Activated T-helper 1 cell treated with anti-CD3 and anti-CD28 coated beads, Interleukin-12 subunit alpha, Interleukin-12 subunit beta, Interleukin-2, Interleukin-4 antibody, amounts not matched to agents 30 ng/mL and 10 ng/mL and 1 ng/mL, durations not matched to agents 14 hours and 24 hours and 36 hours (primary cell): ENCODE measurements at regions of chr4 and their contacts with region 1.

Region 1: GRCh38 chr4:143184217-143185116 is at the start of gene USP38:
- DNase-seq: peak; percentile 80
- H3K4me3 Mint-ChIP-seq: peak within 1 kb of the TSS; percentile 92
- H3K27ac Mint-ChIP-seq: peak within 1 kb of the TSS; percentile 98
- H3K4me1 Mint-ChIP-seq: peaks cover 62% of the 10 kb centered on the region
- H3K27me3 Mint-ChIP-seq: no peaks in the 10 kb centered on the region
- total RNA-seq, gene USP38: 29.8 and 32.0 TPM in 2 replicates

Region 2: GRCh38 chr4:141220655-141221605 is 1963.5 kb before region 1 on chr4 and contains the start of gene ZNF330:
- intact Hi-C with region 1: loop called (anchors 2 kb)
- DNase-seq: peak; percentile 83
- H3K4me3 Mint-ChIP-seq: peak within 1 kb of the TSS; percentile 93
- H3K27ac Mint-ChIP-seq: peak within 1 kb of the TSS; percentile 98
- H3K4me1 Mint-ChIP-seq: peaks cover 47% of the 10 kb centered on the region
- H3K27me3 Mint-ChIP-seq: peaks cover 6% of the 10 kb centered on the region
- total RNA-seq, gene ZNF330: 57.8 and 62.9 TPM in 2 replicates

Region 3: DNA sequence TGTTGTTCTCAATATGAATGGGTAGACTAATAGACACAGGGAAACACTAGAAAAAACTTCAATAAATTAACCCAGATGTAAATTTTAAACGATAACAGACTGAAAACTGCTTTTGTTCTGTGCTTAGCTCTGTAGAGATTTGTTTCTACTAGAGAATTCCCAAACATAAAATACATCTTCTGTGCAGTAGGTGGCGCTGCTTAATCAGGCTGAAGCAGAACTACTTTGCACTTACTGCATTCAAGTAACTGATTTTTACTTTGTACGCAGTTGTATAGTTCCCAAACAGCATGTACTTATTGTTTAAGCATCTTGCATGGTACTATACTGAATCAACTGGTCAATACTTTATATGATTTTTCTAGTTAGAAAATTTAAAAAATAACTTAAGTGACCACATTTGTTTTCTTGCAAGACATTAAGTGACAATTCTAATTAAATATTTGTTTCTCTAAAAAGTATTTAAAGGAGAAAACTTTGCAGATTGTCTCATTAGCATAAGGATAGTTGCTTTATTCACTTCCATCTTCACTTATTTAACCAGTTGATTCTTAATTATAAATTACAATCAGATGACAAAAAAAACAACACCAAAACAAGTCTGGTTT is 1057.5 kb before region 1 on chr4:
- intact Hi-C with region 1: loop called (anchors 2 kb)
- DNase-seq: peak; percentile 27
- H3K4me3 Mint-ChIP-seq: no peak overlapping the region
- H3K27ac Mint-ChIP-seq: no peak overlapping the region
- H3K4me1 Mint-ChIP-seq: peaks cover 18% of the 10 kb centered on the region
- H3K27me3 Mint-ChIP-seq: no peaks in the 10 kb centered on the region

Region 4: GRCh38 chr4:142379277-142380057 is 805.0 kb before region 1 on chr4:
- intact Hi-C with region 1: loop called (anchors 10 kb)
- DNase-seq: no peak
- H3K4me3 Mint-ChIP-seq: no peak overlapping the region
- H3K27ac Mint-ChIP-seq: no peak overlapping the region
- H3K4me1 Mint-ChIP-seq: peaks cover 61% of the 10 kb centered on the region
- H3K27me3 Mint-ChIP-seq: no peaks in the 10 kb centered on the region

Region 5: GRCh38 chr4:143207557-143207956 is 23.1 kb after region 1 on chr4:
- intact Hi-C with region 1: no loop called
- DNase-seq: no peak
- H3K4me3 Mint-ChIP-seq: no peak overlapping the region
- H3K27ac Mint-ChIP-seq: no peak overlapping the region
- H3K4me1 Mint-ChIP-seq: no peaks in the 10 kb centered on the region
- H3K27me3 Mint-ChIP-seq: no peaks in the 10 kb centered on the region

Region 6: DNA sequence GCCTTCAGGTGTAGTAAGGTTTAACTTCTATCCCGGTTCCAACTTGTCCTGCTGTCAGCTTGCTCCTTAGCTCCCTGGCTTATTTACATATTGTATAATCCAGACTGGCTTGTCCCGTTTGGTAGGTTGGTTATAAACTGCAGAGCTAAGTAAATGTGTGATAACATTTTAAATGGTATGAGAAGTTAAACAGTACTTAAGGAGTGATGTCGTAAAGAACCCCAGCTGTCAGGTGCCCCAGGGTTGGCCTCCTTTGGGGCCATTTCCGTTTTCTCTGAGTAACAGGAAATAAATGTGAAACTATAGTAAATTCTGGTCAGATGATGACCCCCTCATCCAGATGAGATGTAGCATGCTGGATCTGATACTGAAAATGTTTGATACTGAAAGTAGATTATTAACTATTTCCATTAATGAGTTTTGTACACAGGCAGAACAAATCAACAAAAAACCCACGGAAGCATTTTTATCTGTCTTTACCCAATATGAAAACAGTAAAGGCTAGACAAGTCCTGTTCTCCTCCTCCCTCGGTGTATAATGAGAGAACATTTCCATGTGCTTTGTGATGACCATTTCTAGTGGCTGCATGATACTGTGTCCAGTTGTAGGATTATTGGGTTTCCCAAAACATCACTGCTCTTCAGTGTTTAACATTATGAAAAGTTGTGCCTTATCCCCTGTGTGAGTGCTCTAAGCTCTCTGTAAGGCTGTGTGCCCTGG is 174.6 kb after region 1 on chr4:
- intact Hi-C with region 1: loop called (anchors 1 kb)
- DNase-seq: no peak
- H3K4me3 Mint-ChIP-seq: peak overlapping the region; percentile 62
- H3K27ac Mint-ChIP-seq: peak overlapping the region; percentile 84
- H3K4me1 Mint-ChIP-seq: peaks cover 18% of the 10 kb centered on the region
- H3K27me3 Mint-ChIP-seq: peaks cover 5% of the 10 kb centered on the region

Region 7: GRCh38 chr4:143513306-143514168 is 329.1 kb after region 1 on chr4 and contains the start of gene SMARCA5:
- intact Hi-C with region 1: loop called (anchors 1 kb)
- DNase-seq: peak; percentile 95
- H3K4me3 Mint-ChIP-seq: peak within 1 kb of the TSS; percentile 94
- H3K27ac Mint-ChIP-seq: peak within 1 kb of the TSS; percentile 93
- H3K4me1 Mint-ChIP-seq: peaks cover 29% of the 10 kb centered on the region
- H3K27me3 Mint-ChIP-seq: peaks cover 10% of the 10 kb centered on the region
- total RNA-seq, gene SMARCA5: 59.9 and 60.7 TPM in 2 replicates